ENCODE measurements at regions of chr2 and their contacts with region 1.

Region 1: DNA sequence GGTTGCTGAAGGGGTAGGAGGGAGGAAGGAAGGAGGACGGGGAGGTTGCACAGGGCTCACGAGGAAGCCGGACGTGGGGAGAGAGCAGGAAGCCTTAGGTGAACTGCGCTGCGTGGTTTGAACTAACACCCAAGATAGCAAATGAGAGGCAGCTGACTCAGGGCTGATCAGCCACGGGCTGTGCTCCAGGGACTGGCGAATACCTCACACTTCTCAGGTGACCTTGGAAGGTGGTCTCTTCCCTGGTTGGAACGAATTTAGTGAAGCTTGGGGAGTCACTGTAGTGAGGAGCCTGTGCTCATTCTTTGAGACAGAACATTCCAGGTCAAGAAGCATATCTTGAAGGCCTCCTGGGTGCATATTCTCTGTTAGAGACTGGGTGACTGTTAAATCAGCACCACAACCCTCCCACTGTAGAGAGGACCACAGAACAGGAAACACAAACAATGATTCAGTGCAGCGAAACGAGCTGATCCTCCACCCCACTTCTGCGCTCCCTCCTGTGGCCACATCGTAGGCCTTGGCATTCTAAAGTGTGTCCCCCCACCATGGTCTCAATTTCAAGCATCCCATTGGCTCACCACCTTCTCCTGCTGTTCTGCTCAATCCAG is 33.8 kb downstream of the TOGARAM2 start:
- DNase-seq: peak; percentile 57 to 90 (median 72)
- ATAC-seq: peak; percentile 66
- H3K4me3 ChIP-seq: peak overlapping the region; percentile 37
- H3K4me3 Mint-ChIP-seq: peak overlapping the region; percentile 82
- H3K27ac ChIP-seq: peak overlapping the region; percentile 81 to 86
- H3K27ac Mint-ChIP-seq: peak overlapping the region; percentile 99
- H3K4me1 ChIP-seq: peaks cover 84% of the 10 kb centered on the region
- H3K4me1 Mint-ChIP-seq: peaks cover 73% of the 10 kb centered on the region
- H3K27me3 ChIP-seq: no peaks in the 10 kb centered on the region
- H3K27me3 Mint-ChIP-seq: no peaks in the 10 kb centered on the region
- CTCF ChIP-seq: peak; percentile 34

Region 2: GRCh38 chr2:28810384-28811285 is 204.3 kb before region 1 on chr2 and contains the start of gene SPDYA:
- CTCF ChIA-PET with region 1: no interaction called
- POLR2A ChIA-PET with region 1: no interaction called
- intact Hi-C with region 1: loop called in 1 of 2 experiments (anchors 10 kb)
- DNase-seq: peak; percentile 55 to 91 (median 74)
- ATAC-seq: peak; percentile 91
- H3K4me3 ChIP-seq: peak within 1 kb of the TSS; percentile 66
- H3K4me3 Mint-ChIP-seq: peak within 1 kb of the TSS; percentile 93
- H3K27ac ChIP-seq: no peak within 1 kb of the TSS
- H3K27ac Mint-ChIP-seq: peak within 1 kb of the TSS; percentile 74
- H3K4me1 ChIP-seq: peaks cover 16% of the 10 kb centered on the region
- H3K4me1 Mint-ChIP-seq: peaks cover 22% of the 10 kb centered on the region
- H3K27me3 ChIP-seq: no peaks in the 10 kb centered on the region
- H3K27me3 Mint-ChIP-seq: no peaks in the 10 kb centered on the region
- CTCF ChIP-seq: no peak
- total RNA-seq, gene SPDYA: 12.7 to 12.8 TPM

Region 3: GRCh38 chr2:28894470-28895177 is 120.3 kb before region 1 on chr2 and contains the start of gene WDR43:
- CTCF ChIA-PET with region 1: no interaction called
- POLR2A ChIA-PET with region 1: interaction called, 6 read pairs
- intact Hi-C with region 1: loop called in 1 of 2 experiments (anchors 10 kb)
- DNase-seq: peak; percentile 90 to 99 (median 97)
- ATAC-seq: peak; percentile 97
- H3K4me3 ChIP-seq: peak within 1 kb of the TSS; percentile 89
- H3K4me3 Mint-ChIP-seq: peak within 1 kb of the TSS; percentile 97
- H3K27ac ChIP-seq: peak within 1 kb of the TSS; percentile 55 to 59
- H3K27ac Mint-ChIP-seq: peak within 1 kb of the TSS; percentile 91
- H3K4me1 ChIP-seq: peaks cover 24% of the 10 kb centered on the region
- H3K4me1 Mint-ChIP-seq: peaks cover 49% of the 10 kb centered on the region
- H3K27me3 ChIP-seq: no peaks in the 10 kb centered on the region
- H3K27me3 Mint-ChIP-seq: no peaks in the 10 kb centered on the region
- CTCF ChIP-seq: no peak
- total RNA-seq, gene WDR43: 62.4 to 73.2 TPM

Region 4: GRCh38 chr2:29000481-29000880 is 14.4 kb before region 1 on chr2:
- CTCF ChIA-PET with region 1: interaction called, 3 read pairs
- POLR2A ChIA-PET with region 1: interaction called, 80 read pairs
- intact Hi-C with region 1: loop called in 1 of 2 experiments (anchors 1 kb)
- DNase-seq: peak in 12 of 14 experiments; percentile 24 to 88 (median 43)
- ATAC-seq: peak; percentile 93
- H3K4me3 ChIP-seq: no peak overlapping the region
- H3K4me3 Mint-ChIP-seq: peak overlapping the region; percentile 39
- H3K27ac ChIP-seq: peak overlapping the region; percentile 33 to 44
- H3K27ac Mint-ChIP-seq: peak overlapping the region; percentile 92
- H3K4me1 ChIP-seq: peaks cover 45% of the 10 kb centered on the region
- H3K4me1 Mint-ChIP-seq: peaks cover 39% of the 10 kb centered on the region
- H3K27me3 ChIP-seq: no peaks in the 10 kb centered on the region
- H3K27me3 Mint-ChIP-seq: no peaks in the 10 kb centered on the region
- CTCF ChIP-seq: no peak

Region 5: GRCh38 chr2:29196792-29197788 is 182.2 kb after region 1 on chr2:
- CTCF ChIA-PET with region 1: no interaction called
- POLR2A ChIA-PET with region 1: no interaction called
- intact Hi-C with region 1: loop called in 1 of 2 experiments (anchors 2 kb)
- DNase-seq: peak; percentile 64 to 85 (median 73)
- ATAC-seq: peak; percentile 97
- H3K4me3 ChIP-seq: no peak overlapping the region
- H3K4me3 Mint-ChIP-seq: no peak overlapping the region
- H3K27ac ChIP-seq: no peak overlapping the region
- H3K27ac Mint-ChIP-seq: no peak overlapping the region
- H3K4me1 ChIP-seq: peaks cover 3% of the 10 kb centered on the region
- H3K4me1 Mint-ChIP-seq: peaks cover 5% of the 10 kb centered on the region
- H3K27me3 ChIP-seq: no peaks in the 10 kb centered on the region
- H3K27me3 Mint-ChIP-seq: no peaks in the 10 kb centered on the region
- CTCF ChIP-seq: peak; percentile 95

Measured in CD4-positive, alpha-beta T cell (primary cell).